Naive thymus-derived CD4-positive, alpha-beta T cell (primary cell): ENCODE measurements at regions of chr10 and their contacts with region 1.

Region 1: DNA sequence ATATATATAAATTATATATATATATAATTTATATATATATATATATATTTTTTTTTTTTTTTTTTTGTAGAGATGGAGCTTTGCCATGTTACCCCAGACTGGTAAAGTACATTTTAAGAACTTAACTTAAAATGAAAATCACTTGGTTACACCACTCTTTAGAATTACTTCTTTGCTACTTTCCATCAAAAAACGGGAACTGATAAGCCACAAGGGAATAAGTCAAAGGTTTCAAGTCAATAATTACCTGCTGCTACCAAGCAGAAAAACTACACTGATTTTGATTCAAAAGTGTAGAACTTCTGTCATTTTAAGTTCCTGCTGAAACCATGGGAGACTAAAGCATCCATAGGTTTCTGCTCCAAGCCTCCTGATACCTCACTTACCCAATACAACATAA is 12.2 kb downstream of the PPA1 start:
- DNase-seq: no peak
- ATAC-seq: no peak
- H3K4me3 ChIP-seq: no peak overlapping the region
- H3K4me3 Mint-ChIP-seq: peak overlapping the region in 4 of 10 donors; percentile 8 to 74 (median 42)
- H3K27ac ChIP-seq: no peak overlapping the region
- H3K27ac Mint-ChIP-seq: peak overlapping the region in 6 of 9 donors; percentile 9 to 78 (median 31)
- H3K4me1 ChIP-seq: peaks cover 0 to 8% of the 10 kb centered on the region in 2 donors
- H3K4me1 Mint-ChIP-seq: peaks cover 9 to 23% (median 12%) of the 10 kb centered on the region in 7 donors
- H3K27me3 ChIP-seq: no peaks in the 10 kb centered on the region
- H3K27me3 Mint-ChIP-seq: no peaks in the 10 kb centered on the region

Region 2: GRCh38 chr10:69541463-69541862 is 679.6 kb before region 1 on chr10:
- CTCF ChIA-PET with region 1: no interaction called
- POLR2A ChIA-PET with region 1: no interaction called
- intact Hi-C with region 1: no loop called
- DNase-seq: no peak
- ATAC-seq: no peak
- H3K4me3 ChIP-seq: no peak overlapping the region
- H3K4me3 Mint-ChIP-seq: no peak overlapping the region
- H3K27ac ChIP-seq: no peak overlapping the region
- H3K27ac Mint-ChIP-seq: no peak overlapping the region
- H3K4me1 ChIP-seq: no peaks in the 10 kb centered on the region
- H3K4me1 Mint-ChIP-seq: peaks cover 0 to 4% (median 0%) of the 10 kb centered on the region in 7 donors
- H3K27me3 ChIP-seq: no peaks in the 10 kb centered on the region
- H3K27me3 Mint-ChIP-seq: peaks cover 0 to 26% (median 9%) of the 10 kb centered on the region in 5 donors

Region 3: GRCh38 chr10:70255329-70256299 is 34.6 kb after region 1 on chr10:
- CTCF ChIA-PET with region 1: no interaction called
- POLR2A ChIA-PET with region 1: no interaction called
- intact Hi-C with region 1: loop called in 1 of 2 experiments (anchors 1 kb)
- DNase-seq: peak in 5 of 9 donors; percentile 4 to 17 (median 15)
- ATAC-seq: peak; percentile 71
- H3K4me3 ChIP-seq: peak overlapping the region; percentile 39
- H3K4me3 Mint-ChIP-seq: peak overlapping the region; percentile 70 to 84 (median 72)
- H3K27ac ChIP-seq: no peak overlapping the region
- H3K27ac Mint-ChIP-seq: peak overlapping the region in 1 of 9 donors; percentile 70
- H3K4me1 ChIP-seq: no peaks in the 10 kb centered on the region
- H3K4me1 Mint-ChIP-seq: peaks cover 0 to 14% (median 7%) of the 10 kb centered on the region in 7 donors
- H3K27me3 ChIP-seq: no peaks in the 10 kb centered on the region
- H3K27me3 Mint-ChIP-seq: peaks cover 26 to 76% (median 49%) of the 10 kb centered on the region in 5 donors

Region 4: GRCh38 chr10:70358446-70358845 is 137.4 kb after region 1 on chr10:
- CTCF ChIA-PET with region 1: interaction called, 192 read pairs
- POLR2A ChIA-PET with region 1: interaction called, 10 read pairs
- intact Hi-C with region 1: no loop called
- DNase-seq: no peak
- ATAC-seq: no peak
- H3K4me3 ChIP-seq: no peak overlapping the region
- H3K4me3 Mint-ChIP-seq: no peak overlapping the region
- H3K27ac ChIP-seq: no peak overlapping the region
- H3K27ac Mint-ChIP-seq: no peak overlapping the region
- H3K4me1 ChIP-seq: no peaks in the 10 kb centered on the region
- H3K4me1 Mint-ChIP-seq: peaks cover 0 to 38% (median 4%) of the 10 kb centered on the region in 7 donors
- H3K27me3 ChIP-seq: no peaks in the 10 kb centered on the region
- H3K27me3 Mint-ChIP-seq: peaks cover 0 to 3% (median 0%) of the 10 kb centered on the region in 5 donors

Region 5: GRCh38 chr10:70758757-70759514 is 537.9 kb after region 1 on chr10:
- CTCF ChIA-PET with region 1: no interaction called
- POLR2A ChIA-PET with region 1: no interaction called
- intact Hi-C with region 1: loop called in 1 of 2 experiments (anchors 2 kb)
- DNase-seq: peak; percentile 20 to 70 (median 54)
- ATAC-seq: peak; percentile 58
- H3K4me3 ChIP-seq: no peak overlapping the region
- H3K4me3 Mint-ChIP-seq: peak overlapping the region in 1 of 10 donors; percentile 38
- H3K27ac ChIP-seq: no peak overlapping the region
- H3K27ac Mint-ChIP-seq: peak overlapping the region in 1 of 9 donors; percentile 28
- H3K4me1 ChIP-seq: no peaks in the 10 kb centered on the region
- H3K4me1 Mint-ChIP-seq: peaks cover 0 to 10% (median 0%) of the 10 kb centered on the region in 7 donors
- H3K27me3 ChIP-seq: no peaks in the 10 kb centered on the region
- H3K27me3 Mint-ChIP-seq: peaks cover 0 to 2% (median 0%) of the 10 kb centered on the region in 5 donors